B cell (primary cell): ENCODE measurements at regions of chr3 and their contacts with region 1.

Region 1: DNA sequence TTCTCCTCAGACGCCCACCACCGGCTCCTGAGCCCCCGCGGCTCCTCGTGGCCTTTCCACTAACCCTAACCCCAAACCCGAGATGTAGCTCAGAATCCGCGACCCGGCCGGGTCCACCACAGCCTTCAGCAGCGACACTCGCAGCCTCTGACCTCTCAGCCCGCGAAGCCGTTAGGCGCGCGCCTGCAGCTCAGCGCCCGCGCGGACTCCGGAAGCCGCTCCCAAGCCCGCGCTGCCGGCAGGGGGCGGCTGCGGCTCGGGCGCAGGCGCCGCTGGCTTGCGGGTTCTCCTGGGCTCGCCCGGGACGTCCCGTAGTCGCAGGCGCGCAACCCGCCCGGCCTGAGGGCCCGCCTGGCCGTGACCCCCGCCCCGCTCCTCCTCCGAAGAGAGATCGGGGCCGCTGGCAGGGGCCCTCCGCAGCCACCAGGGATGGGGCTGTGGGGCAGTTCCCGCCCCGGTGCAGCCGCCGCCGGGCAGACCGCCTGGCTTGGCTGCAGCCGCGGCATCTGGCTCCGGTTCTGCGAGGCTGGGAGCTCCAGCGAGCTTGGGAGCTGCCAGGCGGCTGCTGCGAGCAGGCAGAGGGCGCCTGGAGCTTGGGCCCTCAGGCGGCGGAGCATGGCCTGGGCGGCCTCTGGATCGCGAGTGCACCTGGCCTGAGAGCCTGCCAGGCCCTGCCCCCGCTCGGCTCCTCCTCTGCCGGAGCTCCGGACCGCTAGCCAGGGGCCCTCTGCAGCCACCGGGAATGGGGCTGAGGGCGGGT is 120.7 kb downstream of the LMLN start:
- DNase-seq: peak; percentile 93
- ATAC-seq: peak; percentile 90
- H3K4me3 ChIP-seq: peak overlapping the region in 4 of 5 experiments; percentile 60 to 92 (median 75)
- H3K4me3 Mint-ChIP-seq: peak overlapping the region; percentile 90
- H3K27ac ChIP-seq: peak overlapping the region in 1 of 2 donors; percentile 44
- H3K27ac Mint-ChIP-seq: peak overlapping the region; percentile 86
- H3K4me1 ChIP-seq: peaks cover 16 to 19% of the 10 kb centered on the region in 2 donors
- H3K4me1 Mint-ChIP-seq: peaks cover 13% of the 10 kb centered on the region
- H3K27me3 ChIP-seq: peaks cover 0 to 37% (median 19%) of the 10 kb centered on the region in 4 experiments
- H3K27me3 Mint-ChIP-seq: peaks cover 39% of the 10 kb centered on the region
- CTCF ChIP-seq: peak; percentile 84

Region 2: GRCh38 chr3:197906023-197906849 is 174.5 kb before region 1 on chr3:
- CTCF ChIA-PET with region 1: interaction called, 4 read pairs
- POLR2A ChIA-PET with region 1: no interaction called
- intact Hi-C with region 1: loop called (anchors 10 kb)
- DNase-seq: peak; percentile 81
- ATAC-seq: peak; percentile 85
- H3K4me3 ChIP-seq: no peak overlapping the region
- H3K4me3 Mint-ChIP-seq: peak overlapping the region; percentile 37
- H3K27ac ChIP-seq: no peak overlapping the region
- H3K27ac Mint-ChIP-seq: no peak overlapping the region
- H3K4me1 ChIP-seq: peaks cover 0 to 7% of the 10 kb centered on the region in 2 donors
- H3K4me1 Mint-ChIP-seq: peaks cover 8% of the 10 kb centered on the region
- H3K27me3 ChIP-seq: no peaks in the 10 kb centered on the region
- H3K27me3 Mint-ChIP-seq: no peaks in the 10 kb centered on the region
- CTCF ChIP-seq: peak; percentile 98

Region 3: DNA sequence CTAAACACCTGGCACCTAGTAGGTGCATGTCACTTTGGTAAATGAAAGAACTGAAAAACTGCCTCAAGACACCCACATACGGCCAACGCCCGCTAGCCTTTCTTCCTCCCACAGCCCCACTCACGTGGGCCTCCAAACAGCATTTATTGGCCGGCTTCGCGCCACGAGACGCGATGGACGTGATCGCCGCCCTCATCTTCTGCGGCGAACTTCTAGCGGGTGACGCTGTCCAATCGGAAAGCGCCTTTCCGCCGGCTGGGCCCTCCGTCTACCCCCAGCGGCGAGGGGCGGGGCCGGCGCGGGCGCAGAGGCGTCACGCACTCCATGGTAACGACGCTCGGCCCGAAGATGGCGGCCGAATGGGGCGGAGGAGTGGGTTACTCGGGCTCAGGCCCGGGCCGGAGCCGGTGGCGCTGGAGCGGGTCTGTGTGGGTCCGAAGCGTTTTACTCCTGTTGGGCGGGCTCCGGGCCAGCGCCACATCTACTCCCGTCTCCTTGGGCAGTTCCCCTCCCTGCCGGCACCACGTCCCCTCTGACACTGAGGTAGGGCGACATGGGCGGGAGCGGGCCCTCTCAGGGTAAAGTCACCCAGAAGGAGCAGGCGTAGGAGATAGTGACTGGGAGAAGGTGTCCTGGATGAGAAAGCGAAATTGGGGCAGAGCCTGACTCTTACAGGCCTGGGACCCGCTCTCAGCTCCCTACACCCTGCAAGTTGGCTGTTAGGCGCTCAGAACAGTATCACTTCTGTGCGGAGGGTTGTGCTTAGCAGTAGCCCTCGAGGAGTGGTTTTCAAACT is 120.6 kb before region 1 on chr3 and contains the start of gene LMLN:
- CTCF ChIA-PET with region 1: interaction called, 12 read pairs
- POLR2A ChIA-PET with region 1: no interaction called
- intact Hi-C with region 1: no loop called
- DNase-seq: peak; percentile 97
- ATAC-seq: peak; percentile 97
- H3K4me3 ChIP-seq: peak within 1 kb of the TSS; percentile 62 to 91 (median 83)
- H3K4me3 Mint-ChIP-seq: peak within 1 kb of the TSS; percentile 87
- H3K27ac ChIP-seq: peak within 1 kb of the TSS; percentile 60 to 74
- H3K27ac Mint-ChIP-seq: peak within 1 kb of the TSS; percentile 95
- H3K4me1 ChIP-seq: peaks cover 15 to 19% of the 10 kb centered on the region in 2 donors
- H3K4me1 Mint-ChIP-seq: peaks cover 32% of the 10 kb centered on the region
- H3K27me3 ChIP-seq: no peaks in the 10 kb centered on the region
- H3K27me3 Mint-ChIP-seq: no peaks in the 10 kb centered on the region
- CTCF ChIP-seq: no peak
- total RNA-seq, gene LMLN: 5.5 and 6.7 TPM in 2 replicates

Region 4: GRCh38 chr3:198051836-198052235 is 28.9 kb before region 1 on chr3:
- CTCF ChIA-PET with region 1: interaction called, 15 read pairs
- POLR2A ChIA-PET with region 1: no interaction called
- intact Hi-C with region 1: no loop called
- DNase-seq: no peak
- ATAC-seq: no peak
- H3K4me3 ChIP-seq: no peak overlapping the region
- H3K4me3 Mint-ChIP-seq: no peak overlapping the region
- H3K27ac ChIP-seq: no peak overlapping the region
- H3K27ac Mint-ChIP-seq: no peak overlapping the region
- H3K4me1 ChIP-seq: no peaks in the 10 kb centered on the region
- H3K4me1 Mint-ChIP-seq: no peaks in the 10 kb centered on the region
- H3K27me3 ChIP-seq: peaks cover 0 to 2% (median 0%) of the 10 kb centered on the region in 4 experiments
- H3K27me3 Mint-ChIP-seq: peaks cover 9% of the 10 kb centered on the region
- CTCF ChIP-seq: no peak

Region 5: DNA sequence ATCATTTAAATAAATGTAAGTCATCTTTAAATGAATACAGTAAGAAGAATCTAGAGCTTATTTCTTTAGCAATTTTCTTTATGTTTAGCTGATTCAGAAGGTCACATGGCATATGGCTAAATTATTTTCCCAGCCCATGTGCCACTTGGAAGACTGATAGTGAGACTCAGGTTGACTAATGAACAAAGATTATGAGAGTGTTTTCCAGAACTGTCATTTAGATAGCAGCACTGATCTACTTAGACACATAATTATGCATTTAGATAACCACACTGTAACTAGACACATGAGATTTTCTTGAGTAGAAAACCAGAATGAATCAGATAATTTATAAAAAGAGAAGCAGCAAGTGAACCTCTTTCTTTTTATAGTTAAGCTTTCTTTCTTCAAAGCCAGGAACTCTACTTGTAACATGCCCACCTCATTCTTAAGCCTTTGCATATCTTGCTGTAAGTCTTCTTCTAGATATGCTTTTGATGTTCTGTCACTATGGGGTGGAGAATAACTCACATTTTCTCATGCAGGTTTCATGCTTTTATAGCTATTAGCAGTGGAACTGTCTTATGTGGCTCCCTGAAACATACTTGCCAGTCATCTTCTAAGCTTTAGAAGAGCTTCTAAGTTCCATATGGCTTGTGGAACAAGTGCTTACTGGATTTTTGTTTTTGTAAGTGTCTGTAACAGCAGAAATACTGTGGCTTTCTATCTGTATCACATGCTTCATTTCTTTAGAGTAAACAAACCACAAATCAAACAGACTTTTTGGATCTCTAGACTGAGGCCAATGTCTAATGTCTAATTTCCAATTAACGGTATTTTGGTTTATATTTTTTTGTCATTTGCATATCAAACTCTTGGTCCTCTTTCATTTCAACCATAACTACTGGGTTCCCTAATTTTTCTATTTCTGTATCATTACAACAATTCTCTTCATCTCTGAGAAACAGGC is 19.3 kb before region 1 on chr3:
- CTCF ChIA-PET with region 1: interaction called, 58 read pairs
- POLR2A ChIA-PET with region 1: interaction called, 4 read pairs
- intact Hi-C with region 1: no loop called
- DNase-seq: no peak
- ATAC-seq: no peak
- H3K4me3 ChIP-seq: no peak overlapping the region
- H3K4me3 Mint-ChIP-seq: no peak overlapping the region
- H3K27ac ChIP-seq: no peak overlapping the region
- H3K27ac Mint-ChIP-seq: no peak overlapping the region
- H3K4me1 ChIP-seq: peaks cover 8 to 9% of the 10 kb centered on the region in 2 donors
- H3K4me1 Mint-ChIP-seq: peaks cover 15% of the 10 kb centered on the region
- H3K27me3 ChIP-seq: no peaks in the 10 kb centered on the region
- H3K27me3 Mint-ChIP-seq: peaks cover 6% of the 10 kb centered on the region
- CTCF ChIP-seq: no peak

Region 6: DNA sequence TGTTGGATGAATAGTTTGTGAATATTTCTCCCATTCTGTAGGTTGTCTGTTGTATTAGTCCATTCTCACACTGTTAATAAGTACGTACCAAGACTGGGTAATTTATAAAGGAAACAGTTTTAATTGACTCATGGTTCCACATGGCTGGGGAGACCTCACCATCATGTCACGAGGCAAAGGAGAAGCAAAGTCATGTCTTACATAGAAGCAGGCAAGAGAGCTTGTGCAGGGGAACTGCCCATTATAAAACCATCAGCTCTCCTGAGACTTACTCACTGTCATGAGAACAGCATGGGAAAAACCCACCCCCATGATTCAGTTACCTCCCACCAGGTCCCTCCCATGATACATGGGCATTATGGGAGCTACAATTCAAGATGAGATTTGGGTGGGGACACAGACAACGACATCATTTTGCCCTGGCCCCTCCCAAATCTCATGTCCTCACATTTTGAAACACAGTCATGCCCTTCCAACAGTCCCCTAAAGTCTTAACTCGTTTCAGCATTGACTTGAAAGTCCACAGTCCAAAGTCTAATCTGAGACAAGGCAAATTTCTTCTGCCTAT is 12.5 kb after region 1 on chr3:
- CTCF ChIA-PET with region 1: interaction called, 25 read pairs
- POLR2A ChIA-PET with region 1: no interaction called
- intact Hi-C with region 1: no loop called
- DNase-seq: no peak
- ATAC-seq: no peak
- H3K4me3 ChIP-seq: no peak overlapping the region
- H3K4me3 Mint-ChIP-seq: no peak overlapping the region
- H3K27ac ChIP-seq: no peak overlapping the region
- H3K27ac Mint-ChIP-seq: no peak overlapping the region
- H3K4me1 ChIP-seq: peaks cover 0 to under 1% of the 10 kb centered on the region in 2 donors
- H3K4me1 Mint-ChIP-seq: peaks cover 4% of the 10 kb centered on the region
- H3K27me3 ChIP-seq: peaks cover 0 to 27% (median 14%) of the 10 kb centered on the region in 4 experiments
- H3K27me3 Mint-ChIP-seq: peaks cover 40% of the 10 kb centered on the region
- CTCF ChIP-seq: no peak